Left colon (tissue), 2 donors: ENCODE measurements at regions of chr7 and their contacts with region 1.

Region 1: GRCh38 chr7:43729214-43729923 is at the start of gene COA1:
- DNase-seq: peak; percentile 84 to 90
- ATAC-seq: peak; percentile 99
- total RNA-seq, gene COA1: 33.2 to 35.7 TPM

Region 2: DNA sequence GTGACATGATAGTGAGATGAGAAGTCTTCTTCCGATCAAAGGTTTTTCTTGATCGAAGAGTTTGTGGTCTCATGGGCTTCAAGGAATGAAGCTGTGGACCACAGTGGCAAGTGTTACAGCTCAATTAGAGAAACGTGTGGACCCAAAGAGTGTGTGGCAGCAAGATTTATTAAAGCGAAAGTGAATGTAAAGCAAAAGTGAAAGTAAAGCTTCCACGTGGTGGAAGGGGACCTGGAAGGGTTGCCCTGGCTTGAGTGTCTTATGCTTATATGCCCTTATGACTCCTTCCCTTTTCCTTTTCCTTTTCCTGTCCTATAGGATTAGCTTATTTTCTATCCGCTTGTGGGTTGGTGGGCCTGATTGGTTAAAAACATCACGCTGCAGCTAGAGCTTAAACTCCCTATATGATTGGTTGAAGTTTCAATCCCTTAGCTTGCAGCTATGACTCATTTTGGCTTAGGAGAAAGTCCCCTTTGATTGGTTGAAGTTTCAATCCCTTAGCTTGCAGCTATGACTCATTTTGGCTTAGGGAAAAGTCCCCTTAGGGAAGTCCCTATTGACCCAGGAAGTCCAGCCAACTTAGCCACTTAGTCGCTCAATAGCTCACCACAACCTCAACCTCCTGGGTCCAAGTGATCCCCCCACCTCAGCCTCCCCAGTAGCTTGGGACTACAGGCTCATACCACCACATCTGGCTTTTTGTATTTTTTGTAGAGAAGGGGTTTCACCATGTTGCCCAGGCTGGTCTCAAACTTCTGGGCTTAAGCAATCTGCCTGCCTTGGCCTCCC is 105.3 kb after region 1 on chr7:
- intact Hi-C with region 1: loop called in 1 of 2 experiments (anchors 10 kb)
- DNase-seq: no peak
- ATAC-seq: peak; percentile 49